ENCODE measurements at regions of chr20 and their contacts with region 1.

Region 1: GRCh38 chr20:17682103-17682888 is at the start of gene RRBP1:
- DNase-seq: peak; percentile 98
- H3K4me3 Mint-ChIP-seq: peak within 1 kb of the TSS; percentile 81
- H3K27ac Mint-ChIP-seq: peak within 1 kb of the TSS; percentile 79
- H3K4me1 Mint-ChIP-seq: peaks cover 18% of the 10 kb centered on the region
- H3K27me3 Mint-ChIP-seq: peaks cover 23% of the 10 kb centered on the region
- total RNA-seq, gene RRBP1: 29.6 to 32.0 TPM

Region 2: DNA sequence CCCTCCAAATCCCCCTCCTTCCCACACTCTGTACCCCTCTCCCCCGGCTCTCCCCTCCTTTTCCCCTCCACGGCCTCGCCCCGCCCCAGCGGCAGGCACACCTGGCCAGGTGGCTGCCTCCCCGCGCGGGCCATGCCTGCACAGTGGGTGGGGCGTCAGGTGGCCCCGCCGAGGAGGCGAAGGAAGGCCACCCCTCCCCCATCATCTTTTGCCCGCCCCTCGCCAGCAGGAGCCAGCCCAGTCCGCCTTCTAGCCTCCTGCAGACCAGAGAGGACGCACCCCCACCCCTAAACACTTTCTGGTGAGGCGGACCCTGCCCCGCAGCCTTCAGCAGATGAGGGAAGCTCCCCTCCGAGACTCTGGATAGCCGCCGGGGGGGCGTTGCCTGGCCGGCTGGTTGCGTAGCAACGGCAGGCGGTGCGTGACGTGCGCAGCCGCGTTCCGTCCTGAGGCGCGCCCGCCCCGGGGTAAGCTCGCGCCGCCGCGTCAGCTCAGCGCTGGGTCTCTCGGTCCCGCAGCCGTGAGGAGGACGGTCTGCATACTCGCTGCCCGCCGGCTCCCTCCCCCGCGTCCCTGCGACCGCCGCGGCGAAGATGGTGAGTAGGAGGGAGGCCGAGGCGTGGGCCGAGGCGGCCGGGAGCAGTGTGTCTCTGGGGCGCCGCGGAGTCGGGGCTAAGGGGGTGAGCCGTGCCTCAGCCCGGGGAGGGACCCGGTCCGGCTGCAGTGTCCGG is 112.5 kb before region 1 on chr20 and contains the start of gene DSTN:
- CTCF ChIA-PET with region 1: interaction called, 19 read pairs
- POLR2A ChIA-PET with region 1: interaction called, 12 read pairs
- intact Hi-C with region 1: loop called (anchors 1 kb)
- DNase-seq: peak; percentile 90
- H3K4me3 Mint-ChIP-seq: peak within 1 kb of the TSS; percentile 90
- H3K27ac Mint-ChIP-seq: peak within 1 kb of the TSS; percentile 79
- H3K4me1 Mint-ChIP-seq: peaks cover 27% of the 10 kb centered on the region
- H3K27me3 Mint-ChIP-seq: no peaks in the 10 kb centered on the region
- total RNA-seq, gene DSTN: 91.2 to 94.3 TPM

Region 3: DNA sequence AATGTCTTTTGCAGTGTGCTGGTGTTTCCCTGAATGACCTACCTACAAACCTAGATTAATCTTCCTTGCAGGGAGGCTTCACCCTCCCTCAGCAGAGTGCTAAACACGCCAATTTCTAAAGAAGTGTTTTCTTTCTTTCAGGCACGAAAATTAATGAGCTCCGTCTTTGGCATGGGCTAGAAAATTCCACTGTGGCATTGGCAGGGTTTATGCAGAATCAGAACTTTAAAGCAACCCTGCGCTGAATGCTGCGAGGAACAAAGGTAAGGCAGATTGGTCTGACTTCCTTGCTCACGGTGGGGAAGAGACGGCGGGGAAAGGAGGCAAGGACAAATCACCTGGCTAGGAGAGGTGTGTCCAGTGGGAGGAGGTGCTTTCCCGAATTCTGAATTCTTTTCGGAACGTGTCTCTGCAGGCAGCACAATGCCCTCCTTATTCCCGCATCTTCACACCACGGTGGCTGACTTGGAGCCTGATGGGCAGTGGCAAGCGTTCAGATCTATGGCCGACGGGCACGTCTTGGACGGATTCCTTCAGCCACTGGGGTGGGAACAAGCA is 11.2 kb after region 1 on chr20:
- CTCF ChIA-PET with region 1: interaction called, 26 read pairs
- POLR2A ChIA-PET with region 1: interaction called, 4 read pairs
- intact Hi-C with region 1: no loop called
- DNase-seq: no peak
- H3K4me3 Mint-ChIP-seq: no peak overlapping the region
- H3K27ac Mint-ChIP-seq: no peak overlapping the region
- H3K4me1 Mint-ChIP-seq: no peaks in the 10 kb centered on the region
- H3K27me3 Mint-ChIP-seq: peaks cover 14% of the 10 kb centered on the region

Region 4: DNA sequence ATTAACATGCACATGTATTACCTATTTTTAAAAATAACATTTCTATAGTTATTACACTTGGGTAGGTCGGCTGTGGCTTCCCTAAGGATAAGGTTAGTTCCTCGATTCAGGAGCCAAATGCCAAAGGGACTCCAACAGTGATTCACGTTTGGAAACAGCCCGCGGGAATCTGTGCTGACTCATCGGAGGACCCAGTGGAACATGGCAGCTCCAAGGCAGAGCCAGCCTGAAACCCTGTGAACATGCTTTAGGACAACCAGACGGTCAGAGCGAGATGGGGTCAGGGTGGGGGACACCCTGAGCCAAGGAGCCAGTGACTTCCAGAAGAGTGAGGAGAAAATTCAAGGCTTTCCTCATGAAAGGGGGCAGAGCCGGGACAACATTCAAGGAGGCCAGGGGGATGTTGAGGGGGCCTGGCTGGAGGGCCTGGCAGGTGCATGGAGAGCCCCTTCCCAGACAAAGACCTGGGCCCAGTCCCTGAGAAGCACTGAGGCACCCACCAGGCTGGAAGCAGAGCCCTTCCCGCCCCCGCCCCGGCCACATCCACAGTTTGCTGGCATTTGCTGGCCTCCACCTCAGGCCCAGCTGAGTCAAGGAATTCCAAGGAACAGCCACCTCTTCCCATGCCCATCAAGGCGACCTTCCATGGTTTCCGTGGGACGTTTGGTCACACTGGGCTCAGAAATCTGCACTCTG is 153.1 kb after region 1 on chr20:
- CTCF ChIA-PET with region 1: no interaction called
- POLR2A ChIA-PET with region 1: no interaction called
- intact Hi-C with region 1: no loop called
- DNase-seq: no peak
- H3K4me3 Mint-ChIP-seq: no peak overlapping the region
- H3K27ac Mint-ChIP-seq: no peak overlapping the region
- H3K4me1 Mint-ChIP-seq: no peaks in the 10 kb centered on the region
- H3K27me3 Mint-ChIP-seq: no peaks in the 10 kb centered on the region

Region 5: DNA sequence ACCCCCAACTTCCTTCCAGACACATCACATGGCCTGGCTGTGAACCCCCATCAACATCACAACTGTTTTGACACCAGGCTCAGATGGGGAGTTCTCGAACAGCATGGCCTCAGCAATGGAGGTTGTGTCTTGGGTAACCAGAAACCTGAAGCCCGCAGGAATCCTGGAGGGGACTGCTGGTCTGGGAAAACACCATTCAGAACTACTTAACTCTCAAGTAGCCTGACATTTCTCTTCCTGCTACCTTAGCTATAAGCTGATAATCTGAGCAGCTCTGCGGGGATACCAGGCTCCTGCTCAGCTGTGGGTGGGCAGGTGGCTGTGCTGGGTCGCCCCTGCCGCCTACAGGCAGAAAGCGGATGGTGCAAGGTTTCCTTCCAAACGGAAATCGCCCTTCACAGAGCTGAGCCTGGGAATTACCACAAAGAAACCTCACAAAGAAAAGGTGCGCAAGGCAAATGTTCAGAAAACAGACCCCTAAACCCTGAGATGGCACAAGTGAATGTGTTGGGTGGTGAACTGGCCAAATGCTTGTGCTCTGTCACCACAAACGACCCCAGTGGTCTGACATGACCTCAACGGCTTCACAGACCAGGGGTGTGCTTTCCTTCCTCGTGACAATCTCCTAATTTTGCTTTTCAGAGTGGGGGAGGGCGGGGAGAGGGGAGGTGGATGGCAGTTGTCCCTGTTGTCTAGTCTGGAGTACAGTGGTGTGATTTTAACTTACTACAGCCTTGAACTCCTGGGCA is 256.7 kb after region 1 on chr20:
- CTCF ChIA-PET with region 1: interaction called, 16 read pairs
- POLR2A ChIA-PET with region 1: no interaction called
- intact Hi-C with region 1: loop called (anchors 2 kb)
- DNase-seq: peak; percentile 70
- H3K4me3 Mint-ChIP-seq: no peak overlapping the region
- H3K27ac Mint-ChIP-seq: peak overlapping the region; percentile 5
- H3K4me1 Mint-ChIP-seq: peaks cover 21% of the 10 kb centered on the region
- H3K27me3 Mint-ChIP-seq: no peaks in the 10 kb centered on the region

Region 6: DNA sequence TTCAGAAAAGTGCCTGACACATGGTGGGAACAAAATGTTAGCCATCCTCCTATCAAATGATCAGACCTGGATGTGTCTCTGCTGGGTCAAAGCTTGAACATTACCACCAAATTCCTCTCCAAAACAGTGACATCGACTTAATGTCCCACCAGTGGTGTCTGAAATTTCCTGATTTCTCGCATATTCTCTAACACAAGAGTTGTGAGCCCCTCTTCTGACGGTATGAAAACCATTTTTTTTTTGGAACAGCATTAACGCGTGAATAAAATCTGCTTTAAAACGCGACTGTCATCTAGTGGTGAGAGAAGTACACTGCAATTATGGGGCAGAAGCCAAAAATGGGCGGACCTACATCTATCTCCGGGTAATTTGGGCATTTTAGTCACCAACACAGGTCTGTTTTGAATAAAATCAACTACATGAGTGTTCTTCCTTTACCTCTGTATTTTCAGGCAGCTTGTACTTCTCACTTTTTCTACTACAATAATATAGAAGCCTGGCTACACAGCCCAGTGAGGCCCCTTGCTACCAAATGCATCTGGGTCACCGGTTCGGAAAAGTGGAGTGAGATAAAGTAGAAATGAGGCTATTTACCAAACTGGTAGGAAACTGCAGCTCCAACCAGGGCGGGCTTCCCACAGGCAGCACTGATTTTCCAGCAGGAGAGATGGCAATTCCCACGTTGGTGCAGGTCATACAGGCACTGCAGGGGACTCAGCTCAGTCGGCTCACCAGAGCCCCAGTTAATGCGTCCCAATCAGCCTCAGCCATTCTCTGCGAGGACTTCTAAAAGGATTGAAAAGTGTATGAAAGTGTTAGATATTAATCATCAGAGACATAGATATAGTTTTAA is 313.9 kb after region 1 on chr20:
- CTCF ChIA-PET with region 1: interaction called, 14 read pairs
- POLR2A ChIA-PET with region 1: interaction called, 4 read pairs
- intact Hi-C with region 1: loop called (anchors 1 kb)
- DNase-seq: peak; percentile 55
- H3K4me3 Mint-ChIP-seq: no peak overlapping the region
- H3K27ac Mint-ChIP-seq: no peak overlapping the region
- H3K4me1 Mint-ChIP-seq: peaks cover 28% of the 10 kb centered on the region
- H3K27me3 Mint-ChIP-seq: peaks cover 3% of the 10 kb centered on the region

Region 7: GRCh38 chr20:18287915-18288748 is 605.8 kb after region 1 on chr20 and contains the start of gene ZNF133:
- CTCF ChIA-PET with region 1: interaction called, 3 read pairs
- POLR2A ChIA-PET with region 1: no interaction called
- intact Hi-C with region 1: loop called (anchors 5 kb)
- DNase-seq: peak; percentile 98
- H3K4me3 Mint-ChIP-seq: peak within 1 kb of the TSS; percentile 96
- H3K27ac Mint-ChIP-seq: peak within 1 kb of the TSS; percentile 98
- H3K4me1 Mint-ChIP-seq: peaks cover 14% of the 10 kb centered on the region
- H3K27me3 Mint-ChIP-seq: peaks cover 17% of the 10 kb centered on the region
- total RNA-seq, gene ZNF133: 7.5 to 9.0 TPM